PC-3 (cell line): ENCODE measurements at regions of chr2 and their contacts with region 1.

Region 1: DNA sequence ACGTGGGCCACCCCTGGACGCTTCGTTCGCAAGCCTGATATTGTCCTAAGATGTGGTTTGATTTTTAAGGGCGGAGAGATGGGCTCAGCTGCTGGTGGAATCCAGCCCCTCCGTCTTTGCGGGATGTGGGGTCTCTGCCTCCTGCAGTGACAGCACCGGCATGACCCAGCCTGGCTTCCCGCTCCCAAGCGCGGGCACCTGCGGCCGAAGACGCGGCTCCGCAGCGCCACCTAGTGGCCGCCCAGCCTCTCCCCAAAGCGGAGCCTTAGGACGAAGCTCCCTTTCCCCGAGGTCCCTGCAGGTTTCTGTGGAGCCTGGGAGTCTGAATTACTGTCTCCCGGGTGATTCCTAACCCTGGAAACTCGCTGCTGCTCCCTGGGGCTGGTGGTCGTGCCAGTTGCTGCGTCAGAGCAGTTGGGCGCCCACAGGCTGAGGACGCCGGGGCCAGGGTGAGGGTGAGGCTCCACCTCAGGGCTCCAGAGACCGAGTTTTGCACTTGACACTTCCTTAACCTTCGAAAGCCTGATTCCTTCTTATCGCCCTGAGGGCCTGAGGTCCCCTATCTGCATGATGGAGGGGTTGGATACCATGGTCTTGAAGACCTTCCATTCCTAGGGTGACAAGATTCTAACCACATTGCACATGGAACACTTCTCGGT is 137.5 kb downstream of the TPO start:
- DNase-seq: peak; percentile 73
- ATAC-seq: peak; percentile 87
- H3K4me3 ChIP-seq: no peak overlapping the region
- H3K27ac ChIP-seq: no peak overlapping the region
- H3K4me1 ChIP-seq: peaks cover 24% of the 10 kb centered on the region
- H3K27me3 ChIP-seq: no peaks in the 10 kb centered on the region
- CTCF ChIP-seq: peak; percentile 94

Region 2: DNA sequence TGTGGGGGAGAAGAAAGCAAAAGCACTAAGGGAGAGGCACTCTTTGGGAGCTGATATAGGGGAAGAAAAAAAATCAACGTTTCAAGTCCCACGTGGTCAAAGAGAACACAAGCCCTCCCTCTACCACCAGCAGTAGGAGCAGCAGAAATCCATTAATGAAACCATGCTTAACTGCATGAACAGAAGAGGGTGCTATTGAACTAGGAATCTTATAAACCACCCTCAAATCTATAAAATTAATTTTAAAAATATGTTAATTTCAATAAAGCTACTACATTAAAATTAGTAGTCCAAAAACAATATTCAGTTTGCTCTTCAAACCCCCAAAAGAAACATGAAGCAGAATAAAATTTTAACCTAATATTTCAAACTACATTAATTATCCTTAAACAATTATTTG is 1021.4 kb before region 1 on chr2:
- CTCF ChIA-PET with region 1: no interaction called
- POLR2A ChIA-PET with region 1: no interaction called
- intact Hi-C with region 1: loop called (anchors 5 kb)
- DNase-seq: peak; percentile 77
- ATAC-seq: peak; percentile 60
- H3K4me3 ChIP-seq: no peak overlapping the region
- H3K27ac ChIP-seq: no peak overlapping the region
- H3K4me1 ChIP-seq: 0 out of 2 replicates have a peak, but pooled peaks cover 3% of the 10 kb centered on the region
- H3K27me3 ChIP-seq: no peaks in the 10 kb centered on the region
- CTCF ChIP-seq: peak; percentile 67

Region 3: DNA sequence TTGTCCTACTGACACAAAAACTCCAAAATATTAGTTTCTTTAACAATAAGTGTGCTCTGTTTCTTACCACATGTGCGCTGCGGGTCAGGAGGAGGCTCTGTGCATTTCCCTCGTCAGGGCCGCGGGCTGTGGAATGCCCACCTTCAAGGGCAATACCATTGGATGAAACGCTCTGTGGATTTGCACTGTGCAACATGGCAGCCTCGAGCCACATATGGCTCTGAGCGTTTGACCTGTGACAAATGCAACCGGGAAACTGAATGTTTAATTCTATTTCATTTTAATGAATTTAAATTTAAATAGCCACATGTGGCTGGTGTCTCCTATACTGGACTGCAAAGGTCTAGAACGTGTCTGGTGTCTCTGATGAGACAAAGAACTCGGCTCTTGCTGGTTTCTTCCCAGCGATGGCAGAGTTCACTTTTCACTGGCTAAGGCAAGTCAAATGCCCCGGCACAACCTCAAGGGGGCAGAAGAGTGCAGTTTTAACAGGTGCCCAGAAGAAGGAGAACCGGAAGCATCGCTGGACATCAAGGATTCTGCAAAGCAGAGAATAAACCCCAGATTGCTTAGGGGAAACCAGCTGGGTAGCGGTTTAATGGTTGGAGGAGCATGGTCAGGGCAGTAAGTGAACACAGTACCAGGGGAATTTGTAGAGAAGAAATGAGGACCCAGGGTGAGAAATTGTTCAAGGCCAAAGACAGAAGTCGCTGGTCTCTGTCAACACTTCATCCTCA is 836.6 kb before region 1 on chr2:
- CTCF ChIA-PET with region 1: interaction called, 3 read pairs
- POLR2A ChIA-PET with region 1: no interaction called
- intact Hi-C with region 1: loop called (anchors 10 kb)
- DNase-seq: peak; percentile 68
- ATAC-seq: peak; percentile 67
- H3K4me3 ChIP-seq: no peak overlapping the region
- H3K27ac ChIP-seq: no peak overlapping the region
- H3K4me1 ChIP-seq: no peaks in the 10 kb centered on the region
- H3K27me3 ChIP-seq: peaks cover 43% of the 10 kb centered on the region
- CTCF ChIP-seq: peak; percentile 73

Region 4: GRCh38 chr2:1147873-1148612 is 402.7 kb before region 1 on chr2:
- CTCF ChIA-PET with region 1: no interaction called
- POLR2A ChIA-PET with region 1: no interaction called
- intact Hi-C with region 1: loop called (anchors 5 kb)
- DNase-seq: no peak
- ATAC-seq: no peak
- H3K4me3 ChIP-seq: no peak overlapping the region
- H3K27ac ChIP-seq: no peak overlapping the region
- H3K4me1 ChIP-seq: no peaks in the 10 kb centered on the region
- H3K27me3 ChIP-seq: peaks cover 51% of the 10 kb centered on the region
- CTCF ChIP-seq: no peak

Region 5: DNA sequence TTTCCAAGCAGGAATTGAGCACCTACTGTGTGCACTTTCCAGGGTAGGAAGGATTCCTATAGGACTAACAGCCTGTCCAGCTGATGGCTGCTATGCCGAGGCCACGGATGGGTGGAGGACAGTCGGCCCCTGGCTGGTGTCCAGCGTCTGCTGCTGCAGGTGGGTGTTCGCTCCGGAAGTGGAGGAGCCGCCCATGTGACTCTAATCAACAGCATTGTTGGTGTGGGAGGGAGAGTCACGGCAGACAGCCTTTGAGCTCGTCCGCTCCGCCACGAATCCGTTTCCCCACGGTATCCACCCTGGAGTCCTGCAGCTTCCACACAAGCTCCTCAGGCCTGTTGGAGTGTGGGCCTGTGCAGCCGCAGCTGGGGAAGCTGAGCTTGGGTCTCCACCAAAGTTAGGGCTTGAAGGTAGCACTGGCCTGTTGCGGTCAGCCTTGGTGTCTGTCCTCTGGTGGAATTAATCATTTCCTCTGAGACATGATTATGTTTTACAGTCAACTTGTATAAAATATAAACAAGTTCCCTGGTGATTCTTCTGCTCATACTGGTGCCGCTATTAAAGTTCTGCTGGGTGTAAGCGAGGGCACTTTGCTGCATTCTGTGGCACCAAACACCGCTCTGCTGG is 323.4 kb before region 1 on chr2:
- CTCF ChIA-PET with region 1: no interaction called
- POLR2A ChIA-PET with region 1: no interaction called
- intact Hi-C with region 1: no loop called
- DNase-seq: no peak
- ATAC-seq: no peak
- H3K4me3 ChIP-seq: no peak overlapping the region
- H3K27ac ChIP-seq: no peak overlapping the region
- H3K4me1 ChIP-seq: no peaks in the 10 kb centered on the region
- H3K27me3 ChIP-seq: peaks cover 50% of the 10 kb centered on the region
- CTCF ChIP-seq: no peak

Region 6: GRCh38 chr2:1584691-1585485 is 34.1 kb after region 1 on chr2:
- CTCF ChIA-PET with region 1: interaction called, 5 read pairs
- POLR2A ChIA-PET with region 1: no interaction called
- intact Hi-C with region 1: loop called (anchors 2 kb)
- DNase-seq: peak; percentile 46
- ATAC-seq: peak; percentile 32
- H3K4me3 ChIP-seq: no peak overlapping the region
- H3K27ac ChIP-seq: no peak overlapping the region
- H3K4me1 ChIP-seq: peaks cover 30% of the 10 kb centered on the region
- H3K27me3 ChIP-seq: no peaks in the 10 kb centered on the region
- CTCF ChIP-seq: peak; percentile 67

Region 7: DNA sequence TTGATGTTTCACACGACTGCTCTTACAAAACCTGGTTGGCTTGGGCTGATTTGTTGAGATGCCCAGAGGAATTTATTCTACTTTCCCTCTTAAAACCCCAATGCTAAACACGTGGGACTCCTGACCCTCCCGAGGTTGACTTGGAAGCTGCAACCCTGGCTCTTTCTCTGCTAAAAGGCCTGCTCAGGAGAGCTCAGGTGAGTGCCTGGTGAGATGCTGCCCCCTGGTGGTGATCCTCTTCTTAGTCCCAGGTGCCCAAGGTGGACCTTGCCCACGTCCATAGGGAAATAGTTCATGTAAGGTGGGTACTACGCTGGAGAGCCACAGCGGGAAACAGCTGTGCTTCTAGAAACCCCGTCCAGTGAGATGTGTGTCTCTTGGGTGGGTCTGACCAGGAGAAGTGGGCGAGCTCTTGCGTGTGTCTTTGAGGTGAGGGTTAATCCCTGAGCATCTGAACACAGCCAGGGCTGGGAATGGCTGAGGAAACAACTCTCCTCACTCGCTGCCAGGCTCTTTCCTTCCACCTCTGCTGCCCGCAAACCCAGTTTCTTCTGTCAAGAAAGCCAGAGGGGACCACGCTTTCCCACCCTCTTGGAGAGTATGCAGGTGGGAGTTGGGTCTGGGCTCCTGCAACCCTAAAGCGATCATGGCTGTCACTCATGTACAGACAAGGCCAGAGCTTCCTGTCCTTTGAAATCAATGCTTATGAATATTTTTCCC is 219.1 kb after region 1 on chr2:
- CTCF ChIA-PET with region 1: no interaction called
- POLR2A ChIA-PET with region 1: no interaction called
- intact Hi-C with region 1: loop called (anchors 5 kb)
- DNase-seq: peak; percentile 91
- ATAC-seq: peak; percentile 99
- H3K4me3 ChIP-seq: no peak overlapping the region
- H3K27ac ChIP-seq: no peak overlapping the region
- H3K4me1 ChIP-seq: no peaks in the 10 kb centered on the region; the same call in 1 of the 2 replicates
- H3K27me3 ChIP-seq: no peaks in the 10 kb centered on the region
- CTCF ChIP-seq: peak; percentile 97